ENCODE measurements at regions of chr12 and their contacts with region 1.

Region 1: DNA sequence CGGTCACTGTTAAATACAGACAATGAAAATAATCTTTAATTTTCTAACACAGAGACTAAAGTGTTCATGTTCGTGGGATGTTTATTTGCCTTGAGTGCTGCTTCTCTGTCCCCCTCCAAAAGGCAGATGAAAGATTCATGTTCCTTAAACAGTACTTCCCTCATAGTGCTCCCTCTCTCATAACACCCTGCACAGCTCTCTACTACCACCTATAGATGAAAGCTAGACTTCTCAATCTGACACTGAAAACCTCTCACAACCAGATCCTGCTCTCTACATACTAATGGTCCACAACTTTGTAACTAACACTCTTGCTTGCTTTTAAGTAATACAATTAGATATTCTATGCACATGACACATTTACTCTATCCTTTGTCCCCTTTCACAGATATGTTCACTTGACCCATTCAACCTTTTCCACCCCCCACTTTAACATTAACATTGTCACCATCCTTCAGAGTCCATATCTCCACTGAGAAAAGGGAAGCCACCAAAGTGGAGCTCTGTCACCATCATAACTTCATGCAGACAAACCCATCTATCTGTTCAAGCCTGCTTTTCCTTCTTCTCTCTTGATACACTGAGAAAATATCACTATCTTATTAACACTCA is 266.4 kb upstream of the USP15 start:
- DNase-seq: peak in 3 of 9 donors; percentile 1 to 19 (median 8)
- ATAC-seq: peak; percentile 78
- H3K4me3 ChIP-seq: no peak overlapping the region
- H3K4me3 Mint-ChIP-seq: no peak overlapping the region
- H3K27ac ChIP-seq: no peak overlapping the region
- H3K27ac Mint-ChIP-seq: no peak overlapping the region
- H3K4me1 ChIP-seq: no peaks in the 10 kb centered on the region
- H3K4me1 Mint-ChIP-seq: no peaks in the 10 kb centered on the region
- H3K27me3 ChIP-seq: no peaks in the 10 kb centered on the region
- H3K27me3 Mint-ChIP-seq: peaks cover 0 to 11% (median 6%) of the 10 kb centered on the region in 5 donors

Region 2: DNA sequence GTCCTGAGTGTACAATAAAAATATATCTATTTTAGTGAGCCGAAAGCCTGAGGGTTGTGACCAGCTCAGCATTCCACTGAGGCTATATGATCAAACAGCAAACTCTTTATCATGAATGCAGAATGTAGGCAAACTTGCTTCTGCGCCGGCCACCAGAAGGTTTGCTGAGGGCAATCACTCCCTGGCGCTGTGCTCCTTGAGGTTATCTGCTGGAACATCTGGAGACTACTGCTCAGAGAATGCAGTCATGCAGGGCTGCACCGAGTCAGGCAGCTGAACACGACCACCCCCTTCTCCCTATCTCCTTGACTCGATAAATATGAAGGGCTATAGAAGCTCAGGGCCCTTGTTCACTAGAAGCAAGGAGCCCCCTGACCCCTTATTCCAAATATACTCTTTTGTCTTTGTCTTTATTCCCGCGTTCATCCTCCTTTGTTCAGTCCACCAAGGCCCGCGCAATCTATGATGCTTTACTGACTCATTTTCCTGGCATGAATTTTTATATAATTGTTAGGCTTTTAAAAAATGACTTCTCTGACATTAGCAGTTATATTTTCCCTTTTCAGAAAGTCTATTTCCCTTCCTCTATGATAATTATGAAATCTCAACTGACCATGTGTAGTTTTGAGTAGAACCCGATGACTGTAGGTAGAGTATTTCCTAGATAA is 1308.7 kb before region 1 on chr12:
- CTCF ChIA-PET with region 1: no interaction called
- POLR2A ChIA-PET with region 1: no interaction called
- intact Hi-C with region 1: loop called in 1 of 2 experiments (anchors 5 kb)
- DNase-seq: no peak
- ATAC-seq: no peak
- H3K4me3 ChIP-seq: no peak overlapping the region
- H3K4me3 Mint-ChIP-seq: no peak overlapping the region
- H3K27ac ChIP-seq: no peak overlapping the region
- H3K27ac Mint-ChIP-seq: no peak overlapping the region
- H3K4me1 ChIP-seq: no peaks in the 10 kb centered on the region
- H3K4me1 Mint-ChIP-seq: no peaks in the 10 kb centered on the region
- H3K27me3 ChIP-seq: no peaks in the 10 kb centered on the region
- H3K27me3 Mint-ChIP-seq: peaks cover 0 to 1% (median 0%) of the 10 kb centered on the region in 5 donors

Region 3: DNA sequence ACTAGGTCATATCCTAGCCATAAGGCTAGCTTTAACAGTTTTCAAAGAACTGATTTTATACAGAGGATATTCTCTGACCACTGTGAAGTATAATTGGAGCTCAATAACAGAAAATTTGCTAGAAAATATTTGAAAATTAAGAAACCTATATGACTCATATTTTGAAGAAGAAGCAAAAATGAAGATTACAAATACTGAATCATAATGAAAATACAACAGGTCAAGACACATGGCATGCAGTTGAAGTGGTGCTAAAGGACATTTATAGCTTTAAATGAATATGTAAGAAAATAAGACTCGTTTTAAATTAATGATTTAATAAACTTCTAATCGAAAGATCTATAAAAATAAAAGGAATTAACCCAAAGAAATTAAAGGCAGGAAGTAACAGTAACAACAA is 1163.5 kb before region 1 on chr12:
- CTCF ChIA-PET with region 1: no interaction called
- POLR2A ChIA-PET with region 1: no interaction called
- intact Hi-C with region 1: no loop called
- DNase-seq: no peak
- ATAC-seq: no peak
- H3K4me3 ChIP-seq: no peak overlapping the region
- H3K4me3 Mint-ChIP-seq: no peak overlapping the region
- H3K27ac ChIP-seq: no peak overlapping the region
- H3K27ac Mint-ChIP-seq: no peak overlapping the region
- H3K4me1 ChIP-seq: no peaks in the 10 kb centered on the region
- H3K4me1 Mint-ChIP-seq: no peaks in the 10 kb centered on the region
- H3K27me3 ChIP-seq: no peaks in the 10 kb centered on the region
- H3K27me3 Mint-ChIP-seq: no peaks in the 10 kb centered on the region

Region 4: GRCh38 chr12:61563665-61564450 is 430.0 kb before region 1 on chr12:
- CTCF ChIA-PET with region 1: no interaction called
- POLR2A ChIA-PET with region 1: no interaction called
- intact Hi-C with region 1: no loop called
- DNase-seq: no peak
- ATAC-seq: no peak
- H3K4me3 ChIP-seq: no peak overlapping the region
- H3K4me3 Mint-ChIP-seq: no peak overlapping the region
- H3K27ac ChIP-seq: no peak overlapping the region
- H3K27ac Mint-ChIP-seq: no peak overlapping the region
- H3K4me1 ChIP-seq: no peaks in the 10 kb centered on the region
- H3K4me1 Mint-ChIP-seq: no peaks in the 10 kb centered on the region
- H3K27me3 ChIP-seq: no peaks in the 10 kb centered on the region
- H3K27me3 Mint-ChIP-seq: peaks cover 0 to 4% (median 0%) of the 10 kb centered on the region in 5 donors

Region 5: GRCh38 chr12:61654698-61655097 is 339.1 kb before region 1 on chr12:
- CTCF ChIA-PET with region 1: no interaction called
- POLR2A ChIA-PET with region 1: no interaction called
- intact Hi-C with region 1: loop called in 1 of 2 experiments (anchors 1 kb)
- DNase-seq: no peak
- ATAC-seq: no peak
- H3K4me3 ChIP-seq: no peak overlapping the region
- H3K4me3 Mint-ChIP-seq: no peak overlapping the region
- H3K27ac ChIP-seq: no peak overlapping the region
- H3K27ac Mint-ChIP-seq: no peak overlapping the region
- H3K4me1 ChIP-seq: no peaks in the 10 kb centered on the region
- H3K4me1 Mint-ChIP-seq: no peaks in the 10 kb centered on the region
- H3K27me3 ChIP-seq: peaks cover 0 to 3% of the 10 kb centered on the region in 2 donors
- H3K27me3 Mint-ChIP-seq: no peaks in the 10 kb centered on the region

Region 6: DNA sequence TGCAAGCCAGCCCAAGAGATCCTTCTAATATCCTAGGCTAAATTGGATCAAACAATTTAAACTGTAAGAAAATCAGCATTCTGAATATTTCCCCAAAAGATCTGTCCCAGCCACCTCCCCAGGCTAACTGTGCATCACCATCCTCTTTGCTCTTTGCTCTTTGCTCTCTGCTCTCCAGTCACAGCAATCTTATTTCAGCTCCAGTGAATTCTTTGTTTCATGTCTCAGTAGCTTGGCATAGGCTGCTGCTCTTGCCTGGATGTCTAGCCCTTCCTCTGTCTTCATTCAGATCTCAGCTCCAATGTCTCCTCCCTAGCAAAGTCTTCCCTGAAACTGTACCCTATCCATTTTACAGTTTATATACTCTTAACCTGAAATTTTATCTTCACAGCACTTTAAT is 133.4 kb before region 1 on chr12:
- CTCF ChIA-PET with region 1: no interaction called
- POLR2A ChIA-PET with region 1: no interaction called
- intact Hi-C with region 1: loop called in 1 of 2 experiments (anchors 10 kb)
- DNase-seq: no peak
- ATAC-seq: no peak
- H3K4me3 ChIP-seq: no peak overlapping the region
- H3K4me3 Mint-ChIP-seq: no peak overlapping the region
- H3K27ac ChIP-seq: no peak overlapping the region
- H3K27ac Mint-ChIP-seq: no peak overlapping the region
- H3K4me1 ChIP-seq: no peaks in the 10 kb centered on the region
- H3K4me1 Mint-ChIP-seq: peaks cover 0 to 1% (median 0%) of the 10 kb centered on the region in 7 donors
- H3K27me3 ChIP-seq: no peaks in the 10 kb centered on the region
- H3K27me3 Mint-ChIP-seq: peaks cover 0 to 7% (median 0%) of the 10 kb centered on the region in 5 donors